ENCODE measurements at regions of chr17 and their contacts with region 1.

Region 1: GRCh38 chr17:80477647-80478478 is 1.5 kb upstream of the NPTX1 start:
- DNase-seq: peak; percentile 85
- H3K4me3 Mint-ChIP-seq: no peak overlapping the region
- H3K27ac Mint-ChIP-seq: no peak overlapping the region
- H3K4me1 Mint-ChIP-seq: peaks cover 13% of the 10 kb centered on the region
- H3K27me3 Mint-ChIP-seq: peaks cover 58% of the 10 kb centered on the region

Region 2: GRCh38 chr17:80454557-80455335 is 23.1 kb before region 1 on chr17:
- intact Hi-C with region 1: loop called (anchors 1 kb)
- DNase-seq: peak; percentile 99
- H3K4me3 Mint-ChIP-seq: peak overlapping the region; percentile 98
- H3K27ac Mint-ChIP-seq: peak overlapping the region; percentile 99
- H3K4me1 Mint-ChIP-seq: peaks cover 37% of the 10 kb centered on the region
- H3K27me3 Mint-ChIP-seq: peaks cover 15% of the 10 kb centered on the region

Region 3: GRCh38 chr17:80544655-80545498 is 67.0 kb after region 1 on chr17 and contains the start of gene RPTOR:
- intact Hi-C with region 1: loop called (anchors 5 kb)
- DNase-seq: peak; percentile 97
- H3K4me3 Mint-ChIP-seq: peak within 1 kb of the TSS; percentile 97
- H3K27ac Mint-ChIP-seq: peak within 1 kb of the TSS; percentile 96
- H3K4me1 Mint-ChIP-seq: peaks cover 17% of the 10 kb centered on the region
- H3K27me3 Mint-ChIP-seq: peaks cover 5% of the 10 kb centered on the region
- total RNA-seq, gene RPTOR: 67.2 and 68.2 TPM in 2 replicates

Region 4: GRCh38 chr17:80575057-80575875 is 97.4 kb after region 1 on chr17:
- intact Hi-C with region 1: loop called (anchors 10 kb)
- DNase-seq: peak; percentile 97
- H3K4me3 Mint-ChIP-seq: no peak overlapping the region
- H3K27ac Mint-ChIP-seq: no peak overlapping the region
- H3K4me1 Mint-ChIP-seq: peaks cover 27% of the 10 kb centered on the region
- H3K27me3 Mint-ChIP-seq: no peaks in the 10 kb centered on the region

Measured in activated CD4-positive, alpha-beta T cell treated with anti-CD3 and anti-CD28 coated beads, Interleukin-2, amount 10 ng/mL, durations not matched to agents 24 days and 14 days (primary cell).